ENCODE measurements at regions of chr17 and their contacts with region 1.

Region 1: DNA sequence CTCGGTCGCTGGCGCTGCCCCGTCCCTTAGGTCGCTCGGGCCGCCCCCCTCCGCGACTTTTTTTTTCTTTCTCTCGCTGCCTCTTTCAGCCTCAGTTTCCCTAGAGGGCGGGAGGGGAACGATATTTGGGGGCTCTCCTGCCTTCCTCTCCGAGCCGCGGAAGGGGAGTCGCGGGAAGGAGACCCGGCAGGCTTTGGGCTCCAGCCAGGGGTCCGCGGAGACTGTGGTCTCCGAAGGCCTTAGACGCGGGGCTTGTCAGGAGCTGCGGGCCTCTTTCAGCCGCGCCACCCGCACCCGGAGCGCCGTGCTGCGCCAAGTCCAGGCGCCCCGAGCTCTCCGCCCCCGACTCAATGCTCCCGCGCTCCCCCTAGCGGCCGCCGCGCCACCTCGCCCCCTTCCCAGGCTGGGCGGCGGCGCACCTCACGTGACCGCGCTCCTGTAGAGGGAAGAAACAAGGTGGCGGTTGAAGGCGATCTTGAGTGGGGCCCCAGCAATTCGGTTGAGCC is at the start of gene LRRC37B:
- DNase-seq: peak; percentile 92
- H3K4me3 Mint-ChIP-seq: peak within 1 kb of the TSS; percentile 86
- H3K27ac Mint-ChIP-seq: peak within 1 kb of the TSS; percentile 68
- H3K4me1 Mint-ChIP-seq: peaks cover 20% of the 10 kb centered on the region
- H3K27me3 Mint-ChIP-seq: no peaks in the 10 kb centered on the region
- CTCF ChIP-seq: peak; percentile 94
- total RNA-seq, gene LRRC37B: 12.9 and 13.7 TPM in 2 replicates

Region 2: DNA sequence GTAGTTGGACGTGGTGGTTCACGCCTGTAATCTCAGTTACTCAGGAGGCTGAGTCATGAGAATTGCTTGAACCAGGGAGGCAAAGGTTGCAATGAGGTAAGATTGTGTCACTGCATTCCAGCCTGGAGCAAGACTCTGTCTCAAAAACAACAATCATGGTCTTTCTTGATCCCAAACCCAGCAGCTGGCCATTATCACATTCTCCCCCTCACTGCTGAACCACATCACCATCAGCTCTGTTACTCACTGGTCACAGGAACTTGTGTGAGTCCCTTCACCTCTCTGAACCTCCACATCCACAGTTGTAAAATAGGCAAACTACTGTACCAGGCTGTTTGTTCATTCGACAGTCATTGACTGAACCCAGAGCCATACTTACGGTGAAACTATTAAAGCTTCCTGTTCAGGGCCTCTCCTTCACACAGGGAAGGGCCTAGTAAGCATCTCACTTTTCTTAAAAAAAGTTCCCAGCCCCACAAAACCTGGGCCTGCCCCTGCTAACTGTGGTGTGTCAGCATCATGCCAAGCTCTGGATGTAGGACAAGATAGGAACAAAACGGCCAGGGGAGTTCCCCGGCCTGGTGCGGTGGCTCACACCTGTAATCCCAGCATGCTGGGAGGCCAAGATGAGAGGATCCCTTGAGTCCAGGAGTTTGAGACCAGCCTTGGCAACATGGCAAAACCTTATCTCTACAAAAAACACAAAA is 252.6 kb before region 1 on chr17:
- CTCF ChIA-PET with region 1: no interaction called
- intact Hi-C with region 1: no loop called
- DNase-seq: peak; percentile 4
- H3K4me3 Mint-ChIP-seq: no peak overlapping the region
- H3K27ac Mint-ChIP-seq: no peak overlapping the region
- H3K4me1 Mint-ChIP-seq: no peaks in the 10 kb centered on the region
- H3K27me3 Mint-ChIP-seq: no peaks in the 10 kb centered on the region
- CTCF ChIP-seq: no peak

Region 3: DNA sequence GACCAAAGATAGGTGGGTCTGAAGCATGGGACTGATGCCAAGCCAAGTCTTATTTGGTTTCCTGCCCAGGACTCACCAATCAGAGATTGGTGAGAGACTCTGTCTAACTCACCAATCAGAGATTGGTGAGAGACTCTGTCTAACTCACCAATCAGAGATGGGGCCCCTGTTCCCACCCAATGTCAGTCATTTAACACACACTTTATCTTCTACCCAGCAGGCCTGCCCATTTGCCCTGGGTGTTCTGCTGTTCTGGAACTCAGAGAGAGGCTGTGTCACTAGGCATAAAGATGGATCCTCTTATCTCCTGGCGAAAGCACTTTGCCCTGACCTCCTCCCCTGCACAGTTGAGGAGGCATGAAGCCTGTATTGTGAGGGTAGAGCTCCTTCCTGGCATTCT is 129.8 kb after region 1 on chr17:
- CTCF ChIA-PET with region 1: interaction called, 14 read pairs
- intact Hi-C with region 1: loop called (anchors 5 kb)
- DNase-seq: no peak
- H3K4me3 Mint-ChIP-seq: no peak overlapping the region
- H3K27ac Mint-ChIP-seq: no peak overlapping the region
- H3K4me1 Mint-ChIP-seq: no peaks in the 10 kb centered on the region
- H3K27me3 Mint-ChIP-seq: no peaks in the 10 kb centered on the region
- CTCF ChIP-seq: no peak

Region 4: DNA sequence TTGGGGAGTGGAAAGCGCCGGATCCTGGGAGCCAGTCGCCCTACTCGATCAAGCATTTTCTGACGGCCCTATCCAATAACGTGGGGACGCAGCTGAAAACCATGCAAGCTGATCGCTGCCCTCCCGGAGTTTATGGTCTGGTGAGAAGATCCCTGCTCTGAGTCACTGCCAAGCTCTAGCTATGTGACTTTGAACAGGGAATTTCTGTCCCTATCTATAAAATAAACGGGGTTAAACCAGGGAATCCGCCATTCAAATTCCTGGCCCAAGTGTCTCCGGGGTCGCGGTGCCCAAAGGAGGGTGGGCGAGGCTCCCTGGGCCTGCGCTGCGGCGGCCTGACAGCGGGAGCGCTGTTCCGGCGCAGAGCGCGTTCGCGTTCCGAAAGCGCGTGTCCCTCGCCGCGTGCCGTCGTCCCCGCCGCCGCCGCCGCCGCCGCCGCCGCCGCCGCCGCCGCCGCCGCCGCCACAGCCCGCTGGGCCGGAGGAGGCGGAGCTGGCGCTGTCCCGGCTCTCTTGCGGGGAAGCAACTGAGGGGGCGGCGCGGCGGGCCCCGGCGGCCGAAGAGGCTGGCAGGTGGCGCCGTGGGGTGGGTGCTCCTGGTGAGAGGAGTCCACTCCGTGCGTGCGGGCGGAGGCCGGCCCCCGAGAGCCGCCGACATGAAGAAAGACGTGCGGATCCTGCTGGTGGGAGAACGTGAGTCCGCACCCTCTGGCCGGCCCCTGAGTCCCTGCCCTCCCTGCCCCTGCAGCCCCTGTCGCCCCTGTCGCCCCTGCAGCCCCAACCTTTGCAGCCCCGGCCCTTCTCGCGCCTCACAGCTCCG is 135.2 kb after region 1 on chr17 and contains the start of gene RHOT1:
- CTCF ChIA-PET with region 1: interaction called, 14 read pairs
- intact Hi-C with region 1: loop called (anchors 5 kb)
- DNase-seq: peak; percentile 83
- H3K4me3 Mint-ChIP-seq: peak within 1 kb of the TSS; percentile 97
- H3K27ac Mint-ChIP-seq: peak within 1 kb of the TSS; percentile 78
- H3K4me1 Mint-ChIP-seq: no peaks in the 10 kb centered on the region
- H3K27me3 Mint-ChIP-seq: no peaks in the 10 kb centered on the region
- CTCF ChIP-seq: peak; percentile 67
- total RNA-seq, gene RHOT1: 23.0 TPM in 2 replicates

Measured in Calu3 (cell line).